Activated naive CD4-positive, alpha-beta T cell treated with anti-CD3 and anti-CD28 coated beads for 36 hours (primary cell): ENCODE measurements at regions of chr6 and their contacts with region 1.

Region 1: GRCh38 chr6:87066449-87067333 is 28.2 kb downstream of the CGA start:
- DNase-seq: peak; percentile 67
- H3K4me3 Mint-ChIP-seq: no peak overlapping the region
- H3K27ac Mint-ChIP-seq: no peak overlapping the region
- H3K4me1 Mint-ChIP-seq: no peaks in the 10 kb centered on the region
- H3K27me3 Mint-ChIP-seq: peaks cover 8% of the 10 kb centered on the region

Region 2: GRCh38 chr6:86459978-86460377 is 606.7 kb before region 1 on chr6:
- CTCF ChIA-PET with region 1: no interaction called
- intact Hi-C with region 1: no loop called
- DNase-seq: no peak
- H3K4me3 Mint-ChIP-seq: no peak overlapping the region
- H3K27ac Mint-ChIP-seq: no peak overlapping the region
- H3K4me1 Mint-ChIP-seq: no peaks in the 10 kb centered on the region
- H3K27me3 Mint-ChIP-seq: no peaks in the 10 kb centered on the region

Region 3: DNA sequence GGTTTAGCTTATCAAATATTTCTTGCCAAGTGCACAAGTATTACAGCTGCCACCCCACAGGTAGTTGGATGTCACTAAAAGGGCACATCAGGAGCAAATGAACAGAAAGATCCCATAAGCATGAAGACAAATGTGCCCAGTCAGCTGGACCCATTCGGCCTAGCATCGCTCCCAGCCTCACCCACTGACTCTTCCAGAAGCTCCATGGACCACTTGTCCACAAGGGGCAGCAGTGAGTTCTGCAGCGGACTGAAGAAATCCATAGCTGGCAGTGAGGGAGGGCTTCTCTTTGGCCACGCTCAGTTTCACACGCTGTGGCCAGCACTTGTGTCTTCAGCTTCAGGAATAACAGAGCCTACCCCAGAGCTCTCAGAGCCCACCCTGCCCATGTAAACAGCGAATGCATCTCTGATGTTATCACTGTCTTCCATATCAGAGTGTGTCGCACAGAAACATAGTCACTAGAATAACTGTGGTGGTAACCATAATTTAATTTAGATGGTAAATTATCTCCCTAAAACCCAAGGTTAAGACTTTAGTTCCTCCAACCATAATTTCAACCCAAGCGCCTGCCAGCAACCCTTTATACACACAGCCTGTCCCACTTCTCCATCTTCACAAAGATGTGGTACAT is 12.4 kb after region 1 on chr6:
- CTCF ChIA-PET with region 1: interaction called, 46 read pairs
- intact Hi-C with region 1: no loop called
- DNase-seq: peak; percentile 69
- H3K4me3 Mint-ChIP-seq: no peak overlapping the region
- H3K27ac Mint-ChIP-seq: no peak overlapping the region
- H3K4me1 Mint-ChIP-seq: no peaks in the 10 kb centered on the region
- H3K27me3 Mint-ChIP-seq: peaks cover 24% of the 10 kb centered on the region

Region 4: DNA sequence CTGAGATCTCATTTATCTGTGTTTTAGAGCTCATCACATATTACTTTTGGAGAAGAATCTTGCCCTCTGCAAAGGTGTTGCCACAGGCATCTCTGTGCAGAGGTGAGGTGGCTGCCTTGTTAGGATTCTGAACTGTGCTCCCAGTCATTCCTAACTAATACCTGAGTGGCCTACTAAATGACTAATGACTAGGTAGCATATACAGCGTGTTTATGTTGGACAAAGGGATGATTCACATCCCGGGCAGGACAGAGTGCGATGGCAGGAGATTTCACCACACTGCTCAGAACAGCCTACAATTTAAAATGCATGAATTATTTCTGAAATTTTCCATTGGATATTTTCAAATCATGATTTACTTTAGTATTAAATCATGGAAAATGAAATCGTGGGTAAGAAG is 51.4 kb after region 1 on chr6:
- CTCF ChIA-PET with region 1: no interaction called
- intact Hi-C with region 1: no loop called
- DNase-seq: no peak
- H3K4me3 Mint-ChIP-seq: no peak overlapping the region
- H3K27ac Mint-ChIP-seq: no peak overlapping the region
- H3K4me1 Mint-ChIP-seq: no peaks in the 10 kb centered on the region
- H3K27me3 Mint-ChIP-seq: peaks cover 14% of the 10 kb centered on the region

Region 5: GRCh38 chr6:87261534-87261933 is 194.8 kb after region 1 on chr6:
- CTCF ChIA-PET with region 1: no interaction called
- intact Hi-C with region 1: loop called (anchors 5 kb)
- DNase-seq: no peak
- H3K4me3 Mint-ChIP-seq: no peak overlapping the region
- H3K27ac Mint-ChIP-seq: no peak overlapping the region
- H3K4me1 Mint-ChIP-seq: peaks cover 15% of the 10 kb centered on the region
- H3K27me3 Mint-ChIP-seq: no peaks in the 10 kb centered on the region

Region 6: DNA sequence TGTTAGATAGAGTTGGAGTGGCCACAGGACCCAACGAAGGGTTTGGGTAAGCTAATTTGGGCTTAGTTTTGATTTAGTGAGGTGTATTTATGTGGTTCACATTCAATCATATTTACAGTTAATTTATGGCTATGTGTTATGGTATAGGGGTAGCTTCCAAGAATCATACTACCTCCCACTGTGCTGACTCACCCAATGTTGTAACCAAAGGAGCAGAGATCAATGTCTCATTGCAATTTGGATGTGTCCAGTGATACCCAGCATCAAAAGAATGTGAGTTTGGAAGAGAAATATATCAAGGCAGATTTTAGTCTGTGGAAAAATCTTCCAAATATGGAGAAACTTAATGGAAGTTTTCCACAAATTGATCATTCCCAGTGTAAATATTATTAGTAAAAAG is 230.4 kb after region 1 on chr6:
- CTCF ChIA-PET with region 1: no interaction called
- intact Hi-C with region 1: no loop called
- DNase-seq: no peak
- H3K4me3 Mint-ChIP-seq: no peak overlapping the region
- H3K27ac Mint-ChIP-seq: no peak overlapping the region
- H3K4me1 Mint-ChIP-seq: no peaks in the 10 kb centered on the region
- H3K27me3 Mint-ChIP-seq: peaks cover 23% of the 10 kb centered on the region